H1 (cell line): ENCODE measurements at regions of chr20 and their contacts with region 1.

Region 1: DNA sequence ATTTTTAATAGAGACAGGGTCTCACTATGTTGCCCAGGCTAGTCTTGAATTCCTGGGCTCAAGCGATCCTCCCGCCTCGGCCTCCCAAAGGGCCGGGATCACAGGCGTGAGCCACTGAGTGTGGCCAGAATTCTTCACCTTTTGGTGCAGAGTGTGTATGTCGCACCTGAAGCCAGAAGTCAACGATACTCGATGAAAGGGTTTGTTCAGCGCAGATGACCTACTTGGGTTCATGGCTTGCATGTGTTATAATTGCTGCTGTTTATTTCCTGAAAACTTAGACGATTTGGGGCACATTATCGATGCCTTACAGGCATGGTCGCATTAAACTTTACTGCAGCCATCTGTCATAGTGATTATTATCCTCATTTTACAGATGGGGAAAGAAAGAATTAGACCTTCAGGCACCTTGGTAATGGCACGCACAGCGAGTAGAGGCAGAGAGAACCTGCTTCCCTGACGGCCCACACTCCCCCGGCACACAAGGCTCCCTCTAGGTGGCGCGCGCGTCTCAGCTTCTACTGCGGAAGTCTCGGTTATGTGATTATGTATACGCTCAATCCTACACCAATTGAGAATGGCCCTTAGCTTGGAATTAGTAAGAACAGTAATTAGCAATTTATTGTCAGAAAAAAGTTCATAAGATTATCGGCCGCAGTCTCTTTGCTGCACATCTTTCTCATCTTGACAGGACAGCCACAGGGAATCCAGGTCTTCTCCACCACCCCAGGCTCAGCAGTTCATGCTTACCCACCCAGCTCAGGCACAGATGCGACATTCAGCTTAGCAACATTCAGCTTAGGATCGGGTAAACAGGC is 212.8 kb upstream of the PROKR2 start:
- DNase-seq: peak; percentile 33 to 90
- H3K4me3 ChIP-seq: no peak overlapping the region
- H3K27ac ChIP-seq: no peak overlapping the region
- H3K4me1 ChIP-seq: 0 out of 7 replicates have a peak, but pooled peaks cover 0 to 6% (median 0%) of the 10 kb centered on the region in 4 experiments
- H3K27me3 ChIP-seq: no peaks in the 10 kb centered on the region
- CTCF ChIP-seq: peak; percentile 72 to 98 (median 88)
- EP300 ChIP-seq: no peak
- POLR2A ChIP-seq: no peak
- RAD21 ChIP-seq: peak; percentile 86 to 87

Region 2: DNA sequence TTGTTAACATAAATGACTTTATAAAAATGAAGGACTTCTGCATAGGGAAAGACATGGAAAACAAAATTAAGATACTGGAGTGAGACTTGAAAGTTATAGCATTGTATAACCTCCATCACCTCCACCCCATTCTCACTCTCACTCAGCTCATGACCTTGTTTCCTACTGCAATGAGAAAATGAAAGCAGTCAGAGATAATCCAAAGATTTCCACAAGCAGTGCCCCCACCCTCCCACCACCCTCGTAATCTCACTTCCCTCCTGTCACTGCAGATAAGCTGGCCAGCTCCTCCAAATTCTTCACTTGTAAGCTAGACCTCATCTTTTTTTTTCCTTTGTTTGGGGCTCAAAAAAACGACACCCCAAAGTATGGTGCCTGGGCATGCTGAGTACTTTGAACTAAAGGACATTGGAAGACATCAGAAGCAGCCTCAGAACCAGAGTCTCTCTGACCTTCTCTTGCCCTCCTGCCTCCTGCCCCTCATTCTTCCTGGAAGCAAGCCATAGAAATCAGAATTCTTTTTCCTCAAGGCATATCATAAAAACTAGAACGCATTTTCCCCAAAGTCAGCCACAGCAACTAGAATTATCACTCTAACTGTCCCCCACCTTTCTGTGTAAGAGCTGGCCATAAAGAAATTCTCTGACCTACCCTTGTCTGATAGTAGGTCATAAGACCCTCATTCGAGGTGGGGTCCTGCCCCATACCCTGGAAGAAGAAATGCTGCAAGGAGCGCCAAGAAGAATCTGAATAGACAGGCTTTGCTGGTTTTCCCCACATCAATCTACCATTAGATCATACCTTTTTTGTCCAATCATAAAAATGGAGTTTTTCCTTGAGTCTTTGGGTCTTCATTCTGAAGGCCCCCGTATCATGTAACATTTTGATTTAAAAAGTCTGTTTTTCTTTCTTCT is 159.7 kb before region 1 on chr20:
- CTCF ChIA-PET with region 1: no interaction called
- POLR2A ChIA-PET with region 1: no interaction called
- DNase-seq: no peak
- H3K4me3 ChIP-seq: no peak overlapping the region
- H3K27ac ChIP-seq: no peak overlapping the region
- H3K4me1 ChIP-seq: 0 out of 7 replicates have a peak, but pooled peaks cover 0 to 2% (median 0%) of the 10 kb centered on the region in 4 experiments
- H3K27me3 ChIP-seq: no peaks in the 10 kb centered on the region
- CTCF ChIP-seq: no peak
- EP300 ChIP-seq: no peak
- POLR2A ChIP-seq: no peak
- RAD21 ChIP-seq: no peak

Region 3: DNA sequence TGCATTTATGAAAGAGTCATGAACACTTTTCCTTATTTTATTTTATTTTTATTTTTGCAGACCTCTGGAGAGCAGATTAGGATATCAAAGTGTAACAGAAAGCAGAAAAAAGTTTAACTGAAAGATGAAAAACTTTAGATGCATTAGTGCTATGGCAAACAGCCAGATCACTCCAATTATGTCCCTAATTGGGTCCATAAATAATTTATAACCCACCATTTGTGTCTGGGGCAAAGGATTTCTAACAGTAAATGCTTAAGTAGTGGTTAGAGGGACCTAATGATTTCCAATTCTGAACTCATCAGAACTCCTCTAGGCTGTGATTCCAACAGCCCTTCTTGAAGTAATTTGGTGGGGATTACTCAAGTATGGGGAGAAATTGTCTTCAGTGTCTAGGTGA is 119.1 kb before region 1 on chr20:
- CTCF ChIA-PET with region 1: no interaction called
- POLR2A ChIA-PET with region 1: no interaction called
- DNase-seq: no peak
- H3K4me3 ChIP-seq: no peak overlapping the region
- H3K27ac ChIP-seq: no peak overlapping the region
- H3K4me1 ChIP-seq: no peaks in the 10 kb centered on the region
- H3K27me3 ChIP-seq: no peaks in the 10 kb centered on the region
- CTCF ChIP-seq: no peak
- EP300 ChIP-seq: no peak
- POLR2A ChIP-seq: no peak
- RAD21 ChIP-seq: no peak

Region 4: DNA sequence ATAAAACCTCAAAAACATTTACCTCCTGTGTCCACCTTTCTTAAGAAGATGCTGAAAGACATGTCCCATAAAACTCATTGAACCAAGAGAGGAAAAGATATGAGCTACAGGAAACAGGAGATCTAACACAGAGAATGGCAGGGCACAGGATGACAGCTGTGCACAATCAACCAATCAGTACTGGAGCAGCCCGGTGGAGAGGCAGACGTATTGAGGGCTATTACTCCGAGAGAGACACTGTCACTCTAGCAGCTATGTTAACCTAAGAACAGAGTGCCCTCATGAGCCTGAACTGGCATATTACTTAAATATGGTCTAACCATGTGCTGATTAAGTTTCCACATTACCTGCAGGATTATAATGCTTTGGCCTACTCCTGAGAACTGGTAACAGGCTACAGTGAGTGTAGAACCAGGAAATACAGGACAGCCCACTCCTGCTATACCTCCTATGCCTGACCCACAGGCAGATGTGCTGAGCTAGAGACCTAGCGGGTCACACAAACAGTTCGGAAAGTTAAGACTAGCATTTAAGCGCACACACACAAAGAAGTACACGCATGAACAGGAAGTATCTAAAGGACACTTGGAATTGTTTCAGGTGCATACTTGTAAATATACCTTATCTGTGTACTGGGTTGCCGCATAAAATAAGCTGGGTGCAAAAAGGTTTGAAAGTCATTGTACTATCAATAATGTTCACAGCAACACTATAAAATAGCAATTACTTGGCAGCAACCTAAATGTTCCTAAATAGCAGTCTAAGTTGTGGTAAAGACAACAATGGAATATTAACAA is 21.4 kb after region 1 on chr20:
- CTCF ChIA-PET with region 1: interaction called, 20 read pairs
- POLR2A ChIA-PET with region 1: no interaction called
- DNase-seq: no peak
- H3K4me3 ChIP-seq: no peak overlapping the region
- H3K27ac ChIP-seq: no peak overlapping the region
- H3K4me1 ChIP-seq: peaks cover 0 to 3% (median 0%) of the 10 kb centered on the region in 4 experiments; a peak in 1 of 7 replicates
- H3K27me3 ChIP-seq: no peaks in the 10 kb centered on the region
- CTCF ChIP-seq: no peak
- EP300 ChIP-seq: no peak
- POLR2A ChIP-seq: no peak
- RAD21 ChIP-seq: no peak

Region 5: GRCh38 chr20:5770987-5771318 is 241.4 kb after region 1 on chr20:
- CTCF ChIA-PET with region 1: no interaction called
- POLR2A ChIA-PET with region 1: no interaction called
- DNase-seq: no peak
- H3K4me3 ChIP-seq: no peak overlapping the region
- H3K27ac ChIP-seq: no peak overlapping the region
- H3K4me1 ChIP-seq: no peaks in the 10 kb centered on the region
- H3K27me3 ChIP-seq: no peaks in the 10 kb centered on the region
- CTCF ChIP-seq: no peak
- EP300 ChIP-seq: no peak
- POLR2A ChIP-seq: no peak
- RAD21 ChIP-seq: no peak

Region 6: GRCh38 chr20:5788385-5788895 is 258.9 kb after region 1 on chr20:
- CTCF ChIA-PET with region 1: interaction called, 31 read pairs
- POLR2A ChIA-PET with region 1: no interaction called
- DNase-seq: peak; percentile 33 to 59
- H3K4me3 ChIP-seq: no peak overlapping the region
- H3K27ac ChIP-seq: no peak overlapping the region
- H3K4me1 ChIP-seq: peaks cover 0 to 4% (median 1%) of the 10 kb centered on the region in 4 experiments; a peak in 2 of 7 replicates
- H3K27me3 ChIP-seq: no peaks in the 10 kb centered on the region
- CTCF ChIP-seq: peak; percentile 48 to 97 (median 82)
- EP300 ChIP-seq: no peak
- POLR2A ChIP-seq: no peak
- RAD21 ChIP-seq: peak; percentile 93 to 95

Region 7: GRCh38 chr20:5900908-5901307 is 371.4 kb after region 1 on chr20:
- CTCF ChIA-PET with region 1: no interaction called
- POLR2A ChIA-PET with region 1: no interaction called
- DNase-seq: no peak
- H3K4me3 ChIP-seq: no peak overlapping the region
- H3K27ac ChIP-seq: no peak overlapping the region
- H3K4me1 ChIP-seq: no peaks in the 10 kb centered on the region
- H3K27me3 ChIP-seq: no peaks in the 10 kb centered on the region
- CTCF ChIP-seq: no peak
- EP300 ChIP-seq: no peak
- POLR2A ChIP-seq: no peak
- RAD21 ChIP-seq: no peak

Region 8: GRCh38 chr20:5927749-5928462 is 398.4 kb after region 1 on chr20:
- CTCF ChIA-PET with region 1: interaction called, 37 read pairs
- POLR2A ChIA-PET with region 1: no interaction called
- DNase-seq: no peak
- H3K4me3 ChIP-seq: no peak overlapping the region
- H3K27ac ChIP-seq: no peak overlapping the region
- H3K4me1 ChIP-seq: 0 out of 7 replicates have a peak, but pooled peaks cover 0 to 1% (median 0%) of the 10 kb centered on the region in 4 experiments
- H3K27me3 ChIP-seq: no peaks in the 10 kb centered on the region
- CTCF ChIP-seq: peak in 1 of 3 experiments; percentile 24; a peak in 1 of 4 replicates
- EP300 ChIP-seq: no peak
- POLR2A ChIP-seq: no peak
- RAD21 ChIP-seq: no peak

Region 9: DNA sequence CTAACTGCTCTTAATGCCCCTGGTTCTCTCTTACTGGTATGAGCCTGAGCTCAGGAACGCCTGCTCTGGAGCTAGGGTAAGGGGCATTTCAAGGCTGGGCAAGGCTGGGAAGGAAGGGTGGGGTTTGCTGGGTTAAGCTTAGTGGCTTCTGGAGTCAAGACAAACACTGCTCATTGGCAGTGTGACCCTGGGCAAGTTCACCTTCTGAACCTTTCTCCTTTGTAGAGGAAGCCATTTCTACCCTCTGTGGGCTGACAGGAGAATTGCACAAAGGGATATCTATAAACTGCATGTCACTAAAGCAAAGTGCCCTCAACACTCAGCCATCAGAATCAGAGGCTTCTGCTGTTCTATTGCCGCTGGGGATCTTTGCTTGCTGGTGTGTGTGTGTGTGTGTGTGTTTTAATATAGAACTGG is 544.6 kb after region 1 on chr20:
- CTCF ChIA-PET with region 1: interaction called, 14 read pairs
- POLR2A ChIA-PET with region 1: no interaction called
- DNase-seq: no peak
- H3K4me3 ChIP-seq: no peak overlapping the region
- H3K27ac ChIP-seq: no peak overlapping the region
- H3K4me1 ChIP-seq: no peaks in the 10 kb centered on the region
- H3K27me3 ChIP-seq: no peaks in the 10 kb centered on the region
- CTCF ChIP-seq: peak in 2 of 3 experiments; percentile 25 to 54; a peak in 2 of 4 replicates
- EP300 ChIP-seq: no peak
- POLR2A ChIP-seq: no peak
- RAD21 ChIP-seq: peak; percentile 45 to 48